PC-3 (cell line): ENCODE measurements at regions of chr7 and their contacts with region 1.

Region 1: DNA sequence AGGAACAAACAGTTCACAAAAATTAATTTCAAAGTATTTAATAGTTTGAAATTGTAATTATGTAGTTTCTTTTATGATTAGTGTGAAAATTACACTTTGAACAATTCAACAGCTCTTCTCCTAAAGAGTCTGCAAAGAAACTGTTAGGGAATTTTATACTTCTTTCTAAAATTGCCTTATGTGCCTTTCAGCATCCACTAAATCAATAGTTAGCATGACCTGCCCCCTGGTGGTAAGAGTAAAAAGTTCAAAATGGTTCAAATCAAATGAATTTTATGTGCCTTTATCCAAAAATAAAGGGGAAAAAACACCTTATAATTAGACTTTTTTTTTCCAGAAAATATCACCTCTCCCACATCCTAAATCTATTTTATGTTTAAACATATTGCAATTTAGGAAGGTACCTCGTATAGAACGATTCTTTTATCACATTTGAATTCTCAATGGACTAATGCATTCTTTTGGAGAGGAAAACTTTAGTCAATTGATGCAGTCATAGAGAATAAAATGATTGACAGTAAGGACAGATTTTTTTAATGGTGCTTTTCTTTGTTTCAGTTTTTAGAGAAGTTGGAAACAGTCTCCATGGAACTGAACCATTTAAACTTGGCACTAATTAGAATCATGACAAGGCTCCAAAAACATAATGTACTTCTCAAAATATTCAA is 163.7 kb downstream of the SEMA3D start:
- DNase-seq: peak; percentile 69
- ATAC-seq: no peak
- H3K4me3 ChIP-seq: no peak overlapping the region
- H3K27ac ChIP-seq: no peak overlapping the region
- H3K4me1 ChIP-seq: peaks cover 18% of the 10 kb centered on the region
- H3K27me3 ChIP-seq: no peaks in the 10 kb centered on the region
- CTCF ChIP-seq: peak; percentile 74

Region 2: DNA sequence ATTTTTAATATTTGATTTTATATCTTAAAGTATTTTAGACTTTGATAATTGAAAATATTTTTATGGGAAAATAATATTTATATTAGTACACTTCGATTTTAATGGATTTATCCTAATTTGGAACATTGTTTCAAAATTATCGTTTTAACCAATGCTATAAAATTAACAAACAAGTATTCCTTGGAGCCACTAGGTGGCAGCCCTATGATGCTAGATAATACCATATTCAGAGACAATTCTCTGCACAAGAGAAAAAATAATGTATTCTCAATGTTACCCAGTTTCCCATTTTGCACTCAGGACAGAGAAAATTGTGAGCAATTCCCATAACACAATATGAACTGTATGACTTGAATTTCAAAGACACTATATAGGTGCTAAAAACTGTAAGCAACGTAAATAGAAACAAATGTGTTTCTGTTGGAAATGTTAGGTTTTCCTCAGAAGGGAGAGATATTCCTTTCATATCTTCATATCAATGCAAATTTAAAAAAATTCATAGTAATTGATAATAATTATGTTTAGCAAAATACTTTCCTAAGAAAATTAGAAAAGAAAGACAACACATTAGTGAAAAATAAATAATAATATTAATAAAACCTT is 1612.1 kb before region 1 on chr7:
- CTCF ChIA-PET with region 1: no interaction called
- POLR2A ChIA-PET with region 1: no interaction called
- intact Hi-C with region 1: loop called (anchors 5 kb)
- DNase-seq: peak; percentile 64
- ATAC-seq: no peak
- H3K4me3 ChIP-seq: no peak overlapping the region
- H3K27ac ChIP-seq: no peak overlapping the region
- H3K4me1 ChIP-seq: no peaks in the 10 kb centered on the region
- H3K27me3 ChIP-seq: no peaks in the 10 kb centered on the region
- CTCF ChIP-seq: peak; percentile 76

Region 3: GRCh38 chr7:83936056-83936708 is 1087.0 kb before region 1 on chr7:
- CTCF ChIA-PET with region 1: interaction called, 14 read pairs
- POLR2A ChIA-PET with region 1: no interaction called
- intact Hi-C with region 1: loop called (anchors 1 kb)
- DNase-seq: peak; percentile 76
- ATAC-seq: peak; percentile 91
- H3K4me3 ChIP-seq: no peak overlapping the region
- H3K27ac ChIP-seq: no peak overlapping the region
- H3K4me1 ChIP-seq: no peaks in the 10 kb centered on the region
- H3K27me3 ChIP-seq: no peaks in the 10 kb centered on the region
- CTCF ChIP-seq: peak; percentile 93

Region 4: DNA sequence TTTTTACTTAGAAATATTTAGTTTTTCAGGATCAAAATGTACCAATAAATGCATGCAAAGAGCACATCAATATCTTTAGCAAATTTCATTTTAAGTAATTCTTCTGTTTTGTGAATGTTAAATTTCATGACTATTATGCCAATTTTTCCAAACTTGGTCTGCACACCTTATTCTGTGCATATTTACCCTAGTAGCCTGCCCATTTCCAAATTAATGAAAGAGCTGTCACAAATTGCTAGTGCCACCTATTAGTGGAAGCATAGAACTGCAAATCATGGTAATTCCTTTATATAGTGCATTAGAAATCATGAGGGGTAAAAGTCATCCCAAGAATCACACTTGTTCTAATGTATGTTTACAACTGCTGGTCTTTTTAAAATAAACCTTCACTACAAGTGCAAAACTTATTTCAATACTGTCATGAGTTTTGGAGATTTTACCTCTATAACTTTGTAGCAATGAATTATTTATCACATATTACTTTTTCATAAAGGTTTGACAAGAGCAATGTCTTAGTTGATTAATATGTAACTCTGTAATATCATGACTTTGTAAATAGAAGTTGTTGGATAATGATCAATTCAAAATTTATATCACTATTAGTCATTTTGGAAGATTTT is 834.3 kb before region 1 on chr7:
- CTCF ChIA-PET with region 1: no interaction called
- POLR2A ChIA-PET with region 1: no interaction called
- intact Hi-C with region 1: loop called (anchors 1 kb)
- DNase-seq: peak; percentile 63
- ATAC-seq: peak; percentile 16; the same call in 1 of the 2 replicates
- H3K4me3 ChIP-seq: peak overlapping the region; percentile 55
- H3K27ac ChIP-seq: peak overlapping the region; percentile 94
- H3K4me1 ChIP-seq: peaks cover 56% of the 10 kb centered on the region
- H3K27me3 ChIP-seq: no peaks in the 10 kb centered on the region
- CTCF ChIP-seq: peak; percentile 80

Region 5: DNA sequence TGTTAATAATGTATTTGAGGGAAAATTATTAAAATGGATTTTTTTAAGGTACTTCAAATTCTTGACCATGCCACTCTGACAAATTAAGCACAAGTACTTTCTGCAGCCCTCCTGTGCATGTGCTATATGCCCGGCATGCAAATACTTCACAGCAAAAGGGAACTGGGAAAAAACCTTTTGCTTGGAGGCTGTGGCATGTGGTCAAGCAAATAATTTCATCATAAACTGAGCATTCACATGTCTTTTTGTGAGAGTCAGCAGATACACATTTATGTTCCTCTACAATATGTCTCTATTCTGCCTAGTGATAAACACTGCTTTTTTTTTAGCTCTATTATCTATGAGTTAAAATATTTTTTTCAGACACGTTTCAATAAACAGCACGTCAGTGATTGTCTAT is 774.9 kb before region 1 on chr7:
- CTCF ChIA-PET with region 1: no interaction called
- POLR2A ChIA-PET with region 1: no interaction called
- intact Hi-C with region 1: loop called (anchors 5 kb)
- DNase-seq: no peak
- ATAC-seq: no peak
- H3K4me3 ChIP-seq: no peak overlapping the region
- H3K27ac ChIP-seq: peak overlapping the region; percentile 72; the same call in 1 of the 2 replicates
- H3K4me1 ChIP-seq: peaks cover 32% of the 10 kb centered on the region
- H3K27me3 ChIP-seq: no peaks in the 10 kb centered on the region
- CTCF ChIP-seq: no peak

Region 6: DNA sequence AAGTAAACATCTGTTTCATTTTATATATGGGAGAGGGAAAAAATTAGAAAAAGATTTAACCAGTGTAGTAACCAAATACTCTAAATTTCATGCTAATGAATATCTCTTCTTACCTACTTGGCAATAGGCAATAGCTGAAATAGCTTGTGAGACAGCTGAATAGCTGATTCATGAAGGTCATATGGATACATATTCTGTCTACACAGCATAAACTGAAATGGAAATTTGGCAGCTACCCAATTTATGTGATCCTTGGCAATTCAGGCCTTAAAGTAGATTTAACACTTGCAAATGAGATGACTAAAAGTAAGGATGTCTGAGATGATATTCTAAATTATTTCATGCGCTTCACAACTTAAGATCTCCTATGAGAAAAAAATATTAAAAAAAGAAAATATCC is 567.4 kb before region 1 on chr7:
- CTCF ChIA-PET with region 1: no interaction called
- POLR2A ChIA-PET with region 1: no interaction called
- intact Hi-C with region 1: loop called (anchors 5 kb)
- DNase-seq: peak; percentile 22
- ATAC-seq: no peak
- H3K4me3 ChIP-seq: no peak overlapping the region
- H3K27ac ChIP-seq: no peak overlapping the region
- H3K4me1 ChIP-seq: peaks cover 16% of the 10 kb centered on the region
- H3K27me3 ChIP-seq: no peaks in the 10 kb centered on the region
- CTCF ChIP-seq: no peak

Region 7: DNA sequence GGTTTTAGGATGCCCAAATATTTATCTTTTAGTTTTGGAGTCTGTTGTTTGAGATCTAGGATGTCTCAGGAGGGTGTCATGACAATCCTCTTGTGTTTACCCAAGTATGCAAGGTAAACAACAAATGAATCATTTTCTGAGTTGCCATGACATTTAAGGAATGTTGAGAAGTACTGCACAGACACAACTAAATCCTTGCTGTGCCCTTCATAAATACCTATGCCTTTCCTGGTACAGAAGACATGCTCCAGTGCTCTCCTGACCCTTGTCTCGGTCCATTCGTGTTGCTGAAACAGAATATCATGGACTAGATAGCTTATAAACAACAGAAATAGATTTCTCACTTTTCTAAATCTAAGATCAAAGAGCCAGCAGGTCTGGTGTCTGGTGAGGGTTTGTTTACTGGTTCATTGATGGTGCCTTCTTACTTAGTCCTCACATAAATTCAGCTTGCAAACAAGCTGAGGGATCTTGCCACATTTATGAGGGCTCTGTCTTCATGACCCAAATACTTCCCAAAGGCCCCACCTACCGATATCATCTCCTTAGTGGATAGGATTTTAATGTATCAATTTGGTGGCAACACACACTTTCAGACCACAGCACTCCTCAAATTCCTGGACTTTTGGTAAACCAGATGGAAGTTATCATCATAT is 486.8 kb before region 1 on chr7:
- CTCF ChIA-PET with region 1: no interaction called
- POLR2A ChIA-PET with region 1: no interaction called
- intact Hi-C with region 1: loop called (anchors 5 kb)
- DNase-seq: peak; percentile 82
- ATAC-seq: peak; percentile 98
- H3K4me3 ChIP-seq: no peak overlapping the region
- H3K27ac ChIP-seq: peak overlapping the region; percentile 33
- H3K4me1 ChIP-seq: peaks cover 15% of the 10 kb centered on the region
- H3K27me3 ChIP-seq: no peaks in the 10 kb centered on the region
- CTCF ChIP-seq: no peak